Activated CD4-positive, alpha-beta memory T cell treated with anti-CD3 and anti-CD28 coated beads for 36 hours (primary cell): ENCODE measurements at regions of chr22 and their contacts with region 1.

Region 1: DNA sequence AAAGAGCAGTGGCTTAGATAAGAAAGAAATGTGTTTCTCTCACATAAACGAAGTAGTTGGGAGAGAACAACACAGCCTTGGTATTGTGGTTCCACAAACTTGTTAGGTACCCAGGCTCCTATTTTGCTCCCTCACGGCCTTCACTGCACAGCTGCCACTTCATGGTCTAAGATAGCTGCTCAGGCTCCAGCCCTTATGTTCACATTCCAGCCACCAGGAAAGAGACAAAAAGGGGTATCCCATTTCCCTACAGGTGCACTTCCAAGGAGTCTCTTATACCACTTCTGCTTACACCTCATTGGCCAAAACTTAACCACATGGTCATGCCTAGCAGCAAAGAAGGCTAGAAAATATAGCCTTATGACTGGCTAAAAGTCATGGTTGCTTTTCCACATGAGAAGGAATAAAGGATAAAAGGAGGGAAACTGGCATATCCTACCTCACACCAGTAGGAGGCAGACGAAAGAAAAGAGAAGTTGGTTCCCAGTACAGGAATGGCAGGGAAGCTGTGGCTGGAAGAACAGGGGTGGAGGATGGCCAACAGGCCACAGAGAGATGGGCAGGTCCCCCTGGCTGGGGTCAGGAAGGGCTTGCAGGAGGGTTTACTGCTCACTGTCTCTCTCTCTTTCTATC is 5.4 kb upstream of the HDHD5 start:
- DNase-seq: no peak
- H3K4me3 Mint-ChIP-seq: no peak overlapping the region
- H3K27ac Mint-ChIP-seq: no peak overlapping the region
- H3K4me1 Mint-ChIP-seq: peaks cover 6% of the 10 kb centered on the region
- H3K27me3 Mint-ChIP-seq: no peaks in the 10 kb centered on the region

Region 2: DNA sequence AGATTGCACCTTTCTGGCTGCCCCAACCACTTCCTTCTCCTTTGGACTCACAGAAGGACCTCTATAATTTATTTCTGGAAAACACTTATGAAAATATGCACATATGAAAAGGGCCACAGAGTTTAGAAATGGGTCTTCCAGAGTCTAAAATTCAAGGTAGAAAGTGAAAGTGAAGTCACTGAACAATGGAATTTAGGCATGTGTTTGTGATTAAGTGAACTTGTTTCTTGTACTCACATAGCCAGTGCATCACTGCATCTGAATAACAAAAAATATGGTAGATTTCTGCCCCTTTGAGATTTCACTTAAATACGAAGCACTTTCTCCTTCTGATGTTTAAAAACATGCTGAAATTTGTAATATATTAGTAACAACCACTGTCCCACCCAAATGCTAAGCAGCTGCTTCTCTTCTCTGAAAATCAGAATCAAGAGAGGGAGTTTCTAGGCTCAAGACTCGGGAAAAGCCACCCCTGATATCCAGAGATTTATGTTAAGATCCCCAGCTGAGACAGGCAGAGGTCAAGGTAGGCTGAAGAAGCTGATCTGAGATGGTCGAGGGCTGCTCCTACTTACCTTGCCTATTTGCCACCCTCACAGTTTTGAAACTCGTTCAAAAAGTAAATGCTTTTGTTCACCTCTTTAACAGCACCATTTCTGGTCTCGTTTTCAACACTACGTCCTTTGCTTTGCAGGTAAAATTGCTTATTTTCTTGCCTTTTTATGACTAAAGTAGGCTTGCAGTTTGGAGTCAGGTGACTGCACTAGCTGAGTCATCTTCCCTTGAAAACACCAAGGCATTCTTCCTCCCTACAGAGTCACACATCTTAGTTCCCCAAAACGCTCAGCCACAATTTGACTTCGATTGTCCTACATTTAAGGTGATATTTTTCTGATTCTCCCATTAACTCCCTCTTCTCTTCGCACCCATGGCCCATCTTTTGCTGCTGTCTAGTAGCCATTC is 339.5 kb before region 1 on chr22 and contains the start of gene XKR3:
- CTCF ChIA-PET with region 1: no interaction called
- POLR2A ChIA-PET with region 1: no interaction called
- intact Hi-C with region 1: loop called (anchors 5 kb)
- DNase-seq: peak; percentile 20
- H3K4me3 Mint-ChIP-seq: peak within 1 kb of the TSS; percentile 46
- H3K27ac Mint-ChIP-seq: peak within 1 kb of the TSS; percentile 6
- H3K4me1 Mint-ChIP-seq: peaks cover 17% of the 10 kb centered on the region
- H3K27me3 Mint-ChIP-seq: peaks cover 2% of the 10 kb centered on the region
- total RNA-seq, gene XKR3: not detected

Region 3: GRCh38 chr22:17334059-17334458 is 169.6 kb after region 1 on chr22:
- CTCF ChIA-PET with region 1: no interaction called
- POLR2A ChIA-PET with region 1: no interaction called
- intact Hi-C with region 1: no loop called
- DNase-seq: no peak
- H3K4me3 Mint-ChIP-seq: no peak overlapping the region
- H3K27ac Mint-ChIP-seq: no peak overlapping the region
- H3K4me1 Mint-ChIP-seq: no peaks in the 10 kb centered on the region
- H3K27me3 Mint-ChIP-seq: peaks cover 3% of the 10 kb centered on the region